Activated CD8-positive, alpha-beta T cell treated with anti-CD3 and anti-CD28 coated beads for 36 hours (primary cell): ENCODE measurements at regions of chr1 and their contacts with region 1.

Region 1: GRCh38 chr1:151146412-151147140 is at the start of gene SEMA6C:
- DNase-seq: peak; percentile 89
- ATAC-seq: peak; percentile 99
- H3K4me3 Mint-ChIP-seq: peak within 1 kb of the TSS; percentile 70
- H3K27ac Mint-ChIP-seq: peak within 1 kb of the TSS; percentile 41
- H3K4me1 Mint-ChIP-seq: peaks cover 6% of the 10 kb centered on the region
- H3K27me3 Mint-ChIP-seq: peaks cover 3% of the 10 kb centered on the region
- CTCF ChIP-seq: no peak
- total RNA-seq, gene SEMA6C: 3.4 to 3.7 TPM

Region 2: GRCh38 chr1:151130987-151131586 is 15.5 kb before region 1 on chr1:
- CTCF ChIA-PET with region 1: interaction called, 12 read pairs
- POLR2A ChIA-PET with region 1: interaction called, 3 read pairs
- intact Hi-C with region 1: no loop called
- DNase-seq: peak; percentile 96
- ATAC-seq: peak; percentile 100
- H3K4me3 Mint-ChIP-seq: peak overlapping the region; percentile 69
- H3K27ac Mint-ChIP-seq: peak overlapping the region; percentile 75
- H3K4me1 Mint-ChIP-seq: peaks cover 12% of the 10 kb centered on the region
- H3K27me3 Mint-ChIP-seq: no peaks in the 10 kb centered on the region
- CTCF ChIP-seq: no peak

Region 3: GRCh38 chr1:151255381-151255780 is 108.8 kb after region 1 on chr1:
- CTCF ChIA-PET with region 1: no interaction called
- POLR2A ChIA-PET with region 1: no interaction called
- intact Hi-C with region 1: no loop called
- DNase-seq: no peak
- ATAC-seq: no peak
- H3K4me3 Mint-ChIP-seq: peak overlapping the region; percentile 83
- H3K27ac Mint-ChIP-seq: peak overlapping the region; percentile 88
- H3K4me1 Mint-ChIP-seq: peaks cover 27% of the 10 kb centered on the region
- H3K27me3 Mint-ChIP-seq: no peaks in the 10 kb centered on the region
- CTCF ChIP-seq: no peak